ENCODE measurements at regions of chr2 and their contacts with region 1.

Region 1: DNA sequence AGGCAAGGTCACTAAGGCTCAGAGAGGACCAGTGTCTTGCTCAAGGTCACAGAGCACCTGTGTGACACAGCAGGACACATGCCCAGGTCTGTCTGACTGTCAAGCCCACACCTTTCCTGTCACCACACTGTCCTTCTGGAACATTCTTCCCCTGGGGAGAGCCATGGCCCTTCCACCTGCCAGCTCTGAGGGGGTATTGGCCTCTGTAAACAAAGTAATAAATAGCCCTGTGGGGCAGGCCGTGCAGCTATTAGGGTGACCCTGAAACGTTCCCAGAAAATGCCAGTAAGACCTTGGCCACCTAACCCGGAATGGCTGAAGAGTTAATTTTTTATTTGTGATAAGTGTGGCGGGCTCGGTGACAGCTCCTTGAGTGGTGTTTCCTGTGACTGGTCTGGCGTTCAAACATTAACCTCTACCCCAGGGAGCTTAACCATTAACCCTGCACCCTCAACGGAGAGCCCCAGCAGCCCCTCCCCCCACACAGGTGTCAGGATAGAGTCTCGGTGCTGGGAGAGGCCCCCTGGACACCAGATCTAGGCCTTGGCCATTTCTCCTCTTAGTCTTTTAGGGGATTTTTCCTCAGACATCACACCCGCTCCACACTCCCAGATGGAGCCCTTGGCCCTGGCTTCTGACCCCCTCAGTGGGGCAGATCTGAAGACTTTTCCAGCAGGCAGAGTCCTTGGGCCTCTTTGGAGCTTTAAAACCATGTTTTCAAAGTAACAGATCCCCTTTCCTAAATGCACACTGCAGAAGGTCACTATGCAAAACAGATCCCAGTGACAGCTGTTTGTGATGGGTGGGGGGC is 36.6 kb downstream of the SCTR start:
- DNase-seq: no peak

Region 2: DNA sequence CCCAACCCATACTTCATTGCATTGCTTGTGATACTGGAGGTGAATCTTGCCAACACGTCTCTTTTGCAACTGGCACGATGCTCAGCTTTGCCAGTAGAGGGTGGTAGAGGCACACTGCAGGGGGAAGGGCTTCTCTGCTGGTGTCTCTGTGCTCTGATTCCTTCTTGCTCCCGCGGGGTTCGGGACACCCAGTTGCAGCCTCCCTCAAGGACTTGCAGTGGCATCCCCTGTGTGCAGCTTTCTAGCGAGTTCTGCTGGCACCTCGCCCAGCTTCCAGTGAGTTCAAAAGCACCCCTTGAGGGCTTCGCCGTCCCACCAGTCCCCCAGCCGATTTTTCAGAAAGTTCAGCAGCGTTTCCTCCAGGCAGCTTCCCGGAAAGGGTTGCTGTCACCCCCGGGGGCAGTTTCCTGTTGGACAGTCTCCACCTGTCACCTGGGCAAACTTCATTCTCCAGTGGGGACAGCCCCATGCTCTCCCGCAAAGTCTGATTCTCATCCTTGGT is 604.9 kb before region 1 on chr2:
- intact Hi-C with region 1: loop called in 1 of 2 experiments (anchors 10 kb)
- DNase-seq: peak; percentile 88

Region 3: GRCh38 chr2:119311356-119311755 is 176.3 kb before region 1 on chr2:
- intact Hi-C with region 1: no loop called
- DNase-seq: no peak

Region 4: GRCh38 chr2:119782308-119783027 is 294.8 kb after region 1 on chr2:
- intact Hi-C with region 1: no loop called
- DNase-seq: no peak